A549 (cell line): ENCODE measurements at regions of chr4 and their contacts with region 1.

Region 1: GRCh38 chr4:140153718-140154571 is at the start of gene MAML3:
- DNase-seq: peak in 1 of 2 experiments; percentile 98
- ATAC-seq: peak; percentile 6 to 31; a peak in 5 of 6 replicates
- H3K4me3 ChIP-seq: peak within 1 kb of the TSS; percentile 80
- H3K27ac ChIP-seq: peak within 1 kb of the TSS; percentile 99
- H3K4me1 ChIP-seq: peaks cover 24% of the 10 kb centered on the region
- CTCF ChIP-seq: no peak
- EP300 ChIP-seq: peak in 1 of 2 experiments; percentile 29; a peak in 1 of 5 replicates
- POLR2A ChIP-seq: peak; percentile 51
- RAD21 ChIP-seq: peak in 1 of 2 experiments; percentile 57; a peak in 3 of 5 replicates
- polyA plus RNA-seq, gene MAML3: 18.1 and 22.2 TPM in 2 replicates

Region 2: GRCh38 chr4:140018931-140019618 is 134.9 kb before region 1 on chr4:
- CTCF ChIA-PET with region 1: no interaction called
- POLR2A ChIA-PET with region 1: interaction called, 17 read pairs
- DNase-seq: peak in 1 of 2 experiments; percentile 91
- ATAC-seq: peak; percentile 77 to 87
- H3K4me3 ChIP-seq: peak overlapping the region; percentile 19; the same call in 1 of the 3 replicates
- H3K27ac ChIP-seq: peak overlapping the region; percentile 93
- H3K4me1 ChIP-seq: peaks cover 76% of the 10 kb centered on the region
- CTCF ChIP-seq: no peak
- EP300 ChIP-seq: peak in 1 of 2 experiments; percentile 20; a peak in 1 of 5 replicates
- POLR2A ChIP-seq: no peak
- RAD21 ChIP-seq: peak; percentile 17 to 20; a peak in 1 of 5 replicates

Region 3: DNA sequence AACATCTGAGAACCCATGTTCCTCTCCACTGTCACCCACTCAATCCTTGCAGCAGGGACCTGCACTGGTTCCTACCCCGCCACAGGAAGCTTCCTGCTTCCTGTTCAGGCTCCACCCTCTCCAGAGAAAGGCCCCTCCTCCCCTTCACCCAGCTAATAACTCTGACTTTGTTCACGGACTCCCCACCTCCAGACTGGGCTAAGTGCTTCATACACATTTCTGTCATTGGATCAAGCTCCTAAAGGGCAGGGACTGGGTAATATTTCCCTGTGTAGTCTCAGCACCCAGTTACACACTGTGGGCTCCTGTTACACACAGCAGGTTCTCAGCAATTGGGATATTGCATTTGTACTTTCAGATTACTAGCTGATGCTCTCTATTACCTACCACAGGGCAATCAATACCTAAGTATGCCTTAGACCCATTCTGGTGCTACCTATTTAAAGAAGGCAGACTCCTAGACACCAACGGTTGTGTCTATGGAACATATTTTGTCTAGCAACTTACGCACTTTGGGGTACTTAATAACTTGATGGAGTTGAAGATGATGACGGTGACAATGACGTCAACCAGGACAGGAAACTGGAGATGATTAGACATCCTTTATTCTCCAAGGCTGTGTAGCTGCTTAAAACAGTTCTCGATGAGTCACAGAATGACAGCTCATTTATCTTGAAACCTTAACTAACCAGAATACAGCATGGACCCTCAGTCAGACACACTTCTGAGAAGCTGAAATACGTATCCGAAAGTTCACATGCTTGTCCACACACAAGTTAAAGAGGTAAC is 58.1 kb before region 1 on chr4:
- CTCF ChIA-PET with region 1: interaction called, 7 read pairs
- POLR2A ChIA-PET with region 1: interaction called, 29 read pairs
- DNase-seq: peak; percentile 67 to 98
- ATAC-seq: peak; percentile 77 to 80
- H3K4me3 ChIP-seq: peak overlapping the region; percentile 13; the same call in 2 of the 3 replicates
- H3K27ac ChIP-seq: peak overlapping the region; percentile 97 to 99
- H3K4me1 ChIP-seq: peaks cover 98% of the 10 kb centered on the region
- CTCF ChIP-seq: no peak
- EP300 ChIP-seq: peak; percentile 94 to 95; a peak in 4 of 5 replicates
- POLR2A ChIP-seq: peak; percentile 34
- RAD21 ChIP-seq: 0 out of 5 replicates have a peak, but pooled peaks of 1 of the 2 experiments have one; percentile 30

Region 4: DNA sequence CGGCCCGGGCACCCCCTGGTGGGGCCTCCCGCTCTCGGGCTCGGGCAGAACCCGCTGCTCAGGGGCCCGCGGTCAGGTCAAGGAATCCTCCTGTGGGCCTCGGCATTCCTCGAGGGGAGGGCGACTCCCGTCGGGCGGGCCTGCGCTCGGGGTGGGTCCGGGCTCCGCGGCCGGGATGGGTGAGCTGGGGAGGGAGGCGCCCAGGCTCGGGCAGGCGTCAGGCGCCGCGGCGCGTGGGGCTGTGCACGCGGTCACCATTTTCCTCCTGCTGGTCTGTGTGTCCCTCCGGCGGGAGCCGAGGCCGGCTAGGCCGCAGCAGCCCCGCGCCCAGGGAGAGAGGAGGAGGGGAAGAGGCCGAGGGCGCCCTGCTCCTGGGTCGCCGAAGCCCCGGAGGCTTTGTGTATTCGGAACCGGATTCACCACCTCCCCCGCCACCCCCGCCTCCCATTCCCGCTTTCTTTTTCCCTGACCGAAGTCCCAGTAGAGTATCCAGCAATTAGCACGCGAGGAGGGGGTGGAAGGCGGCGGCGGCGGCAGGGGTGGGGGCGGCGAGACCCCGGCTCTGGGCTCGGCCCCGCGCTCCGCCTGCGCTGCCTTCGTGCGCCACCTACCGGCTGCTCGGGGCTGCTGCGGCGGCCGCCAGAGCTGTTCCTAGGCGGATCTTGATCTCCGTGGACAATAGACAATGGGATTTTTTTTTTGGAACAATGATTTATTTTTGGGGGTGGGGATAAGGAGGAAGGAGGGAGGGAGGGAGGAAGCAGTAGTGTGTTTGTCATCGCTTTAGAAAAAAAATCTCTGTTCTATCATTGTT is 99.0 kb after region 1 on chr4:
- CTCF ChIA-PET with region 1: interaction called, 5 read pairs
- POLR2A ChIA-PET with region 1: interaction called, 40 read pairs
- DNase-seq: peak; percentile 63 to 77
- ATAC-seq: peak; percentile 78 to 86
- H3K4me3 ChIP-seq: peak overlapping the region; percentile 44
- H3K27ac ChIP-seq: peak overlapping the region; percentile 94 to 98
- H3K4me1 ChIP-seq: peaks cover 72% of the 10 kb centered on the region
- CTCF ChIP-seq: peak; percentile 85
- EP300 ChIP-seq: no peak
- POLR2A ChIP-seq: no peak
- RAD21 ChIP-seq: peak; percentile 78 to 96